ENCODE measurements at regions of chr6 and their contacts with region 1.

Region 1: DNA sequence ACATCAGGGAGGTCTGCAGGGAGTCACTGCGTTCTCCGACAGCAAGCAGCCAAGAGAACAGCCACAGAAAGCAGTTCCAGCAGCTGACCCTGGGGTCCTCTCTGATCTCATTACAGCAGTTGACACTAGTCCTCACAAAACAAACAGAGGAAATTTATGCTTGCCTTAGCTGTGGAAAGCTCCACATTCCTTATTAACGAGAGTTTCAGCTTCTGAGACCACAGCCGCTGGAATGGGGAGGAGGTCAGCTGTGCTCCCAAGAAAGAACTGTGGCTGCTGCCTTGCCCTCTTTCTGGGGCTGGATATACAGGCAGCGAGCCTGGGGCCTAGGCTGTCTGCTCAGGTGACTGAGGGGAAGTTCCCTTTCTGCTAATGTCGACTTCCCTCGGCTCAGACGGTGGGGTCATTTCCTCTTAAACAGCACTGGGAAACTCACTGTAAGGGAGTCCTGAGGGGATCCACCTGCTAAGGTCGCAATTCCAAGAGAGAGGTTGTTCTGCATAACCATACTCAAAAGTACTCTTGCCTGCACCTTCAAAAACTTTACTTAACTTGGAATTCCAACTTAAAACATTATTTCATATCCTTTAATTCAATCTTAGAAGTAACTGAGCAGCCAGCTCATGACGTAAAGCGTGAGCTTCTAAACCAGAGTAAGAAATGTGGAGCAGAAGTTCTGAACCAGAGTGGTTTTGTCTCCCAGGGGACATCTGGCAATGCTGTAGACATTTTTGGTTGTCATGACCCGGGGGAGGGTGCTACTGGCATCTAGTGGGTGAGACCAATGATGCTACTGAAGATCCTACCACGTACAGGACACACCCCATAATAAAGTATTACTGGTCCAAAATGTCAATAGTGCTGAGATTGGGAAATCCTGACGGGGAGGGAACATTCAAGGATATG is 80.3 kb downstream of the BACH2 start:
- DNase-seq: no peak
- ATAC-seq: no peak
- H3K4me3 ChIP-seq: no peak overlapping the region
- H3K27ac ChIP-seq: no peak overlapping the region
- H3K4me1 ChIP-seq: peaks cover 52% of the 10 kb centered on the region
- H3K27me3 ChIP-seq: no peaks in the 10 kb centered on the region
- CTCF ChIP-seq: no peak

Region 2: DNA sequence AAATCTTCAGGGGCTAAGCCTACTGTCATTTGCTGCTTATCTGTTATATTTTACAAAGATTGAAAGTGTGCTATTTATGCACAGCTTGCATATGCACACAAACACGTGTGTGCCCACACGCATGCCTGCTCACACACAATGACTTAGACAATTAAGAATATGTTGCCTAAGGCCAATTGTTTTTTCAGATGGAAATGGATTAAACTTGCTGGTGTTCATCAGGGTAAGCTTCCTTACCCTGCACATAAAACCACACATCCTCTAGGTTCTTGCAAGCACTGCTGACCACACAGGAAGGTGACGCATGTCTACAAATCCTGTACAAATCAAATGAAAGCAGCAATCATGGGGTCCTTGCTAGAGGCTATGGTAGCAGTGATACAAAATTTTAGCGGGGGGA is 263.6 kb before region 1 on chr6:
- CTCF ChIA-PET with region 1: no interaction called
- POLR2A ChIA-PET with region 1: no interaction called
- intact Hi-C with region 1: loop called (anchors 2 kb)
- DNase-seq: peak; percentile 92
- ATAC-seq: peak; percentile 81
- H3K4me3 ChIP-seq: peak overlapping the region; percentile 16; the same call in 1 of the 2 replicates
- H3K27ac ChIP-seq: peak overlapping the region; percentile 90
- H3K4me1 ChIP-seq: peaks cover 44% of the 10 kb centered on the region
- H3K27me3 ChIP-seq: no peaks in the 10 kb centered on the region
- CTCF ChIP-seq: no peak

Region 3: GRCh38 chr6:90204327-90205056 is 11.8 kb before region 1 on chr6:
- CTCF ChIA-PET with region 1: no interaction called
- POLR2A ChIA-PET with region 1: no interaction called
- intact Hi-C with region 1: loop called (anchors 2 kb)
- DNase-seq: peak; percentile 28
- ATAC-seq: peak; percentile 64
- H3K4me3 ChIP-seq: no peak overlapping the region
- H3K27ac ChIP-seq: no peak overlapping the region
- H3K4me1 ChIP-seq: peaks cover 5% of the 10 kb centered on the region; the same call in 1 of the 2 replicates
- H3K27me3 ChIP-seq: no peaks in the 10 kb centered on the region
- CTCF ChIP-seq: no peak

Region 4: DNA sequence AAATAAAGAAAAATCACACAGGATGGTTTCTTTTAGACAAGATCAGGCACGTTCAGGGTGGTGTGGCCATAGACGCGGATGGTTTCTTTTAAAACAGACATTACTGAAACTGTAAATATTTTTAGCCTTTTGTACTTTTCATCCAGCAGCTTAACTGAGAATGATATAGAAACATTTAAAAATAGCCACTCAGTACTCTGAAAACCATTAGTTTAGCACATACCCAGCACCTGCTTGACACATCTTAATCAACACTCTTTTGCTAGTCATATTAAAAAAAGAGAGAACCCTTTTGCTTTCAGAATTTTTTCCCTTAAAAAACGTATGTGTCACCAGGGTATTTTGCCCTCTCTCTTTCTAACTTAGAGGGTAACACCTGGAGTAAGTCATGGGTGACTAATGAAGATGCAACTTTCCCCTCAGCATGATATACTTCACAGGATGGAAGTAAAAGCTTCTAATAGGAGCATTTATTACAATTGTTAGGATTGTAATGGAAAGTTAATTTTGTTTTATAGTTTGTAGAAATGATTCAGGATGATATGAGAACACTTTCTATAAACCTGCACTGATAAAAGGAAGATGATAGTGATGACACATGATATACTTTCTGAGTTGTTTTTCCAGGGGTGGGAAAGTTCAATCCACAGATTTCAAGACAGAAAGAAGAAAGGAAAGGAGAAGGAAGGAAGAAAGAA is 35.1 kb after region 1 on chr6:
- CTCF ChIA-PET with region 1: no interaction called
- POLR2A ChIA-PET with region 1: no interaction called
- intact Hi-C with region 1: loop called (anchors 5 kb)
- DNase-seq: no peak
- ATAC-seq: no peak
- H3K4me3 ChIP-seq: no peak overlapping the region
- H3K27ac ChIP-seq: peak overlapping the region; percentile 18; the same call in 1 of the 2 replicates
- H3K4me1 ChIP-seq: peaks cover 11% of the 10 kb centered on the region; the same call in 1 of the 2 replicates
- H3K27me3 ChIP-seq: no peaks in the 10 kb centered on the region
- CTCF ChIP-seq: no peak

Region 5: GRCh38 chr6:90285611-90286381 is 69.5 kb after region 1 on chr6:
- CTCF ChIA-PET with region 1: no interaction called
- POLR2A ChIA-PET with region 1: interaction called, 4 read pairs
- intact Hi-C with region 1: loop called (anchors 1 kb)
- DNase-seq: peak; percentile 80
- ATAC-seq: peak; percentile 87
- H3K4me3 ChIP-seq: peak overlapping the region; percentile 74; the same call in 1 of the 2 replicates
- H3K27ac ChIP-seq: peak overlapping the region; percentile 98
- H3K4me1 ChIP-seq: peaks cover 41% of the 10 kb centered on the region
- H3K27me3 ChIP-seq: no peaks in the 10 kb centered on the region
- CTCF ChIP-seq: no peak

Region 6: DNA sequence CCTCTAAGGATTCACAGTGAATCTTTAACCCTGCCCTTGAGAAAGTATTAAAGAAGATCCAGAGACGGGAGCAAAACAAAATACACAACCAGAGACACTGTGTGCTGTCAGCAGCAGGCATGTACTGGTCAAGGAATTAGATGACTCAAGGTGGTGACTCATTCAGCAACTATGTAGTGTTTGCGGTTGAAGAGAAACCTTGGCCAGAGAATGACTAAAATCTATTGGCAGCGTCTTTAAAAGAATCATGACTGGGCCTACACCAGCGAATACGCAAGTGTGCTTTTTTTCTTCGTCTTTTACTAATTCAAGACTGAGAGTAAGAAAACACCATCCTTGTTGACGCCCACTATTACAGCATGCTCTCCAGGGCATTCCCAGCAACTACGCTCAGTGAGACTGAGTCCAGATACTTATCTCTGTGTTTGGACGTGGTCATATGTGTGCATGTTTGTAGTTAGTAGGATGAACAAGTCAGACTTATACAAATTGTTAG is 152.7 kb after region 1 on chr6:
- CTCF ChIA-PET with region 1: no interaction called
- POLR2A ChIA-PET with region 1: no interaction called
- intact Hi-C with region 1: loop called (anchors 2 kb)
- DNase-seq: peak; percentile 98
- ATAC-seq: peak; percentile 98
- H3K4me3 ChIP-seq: peak overlapping the region; percentile 45; the same call in 1 of the 2 replicates
- H3K27ac ChIP-seq: peak overlapping the region; percentile 84
- H3K4me1 ChIP-seq: peaks cover 48% of the 10 kb centered on the region
- H3K27me3 ChIP-seq: no peaks in the 10 kb centered on the region
- CTCF ChIP-seq: no peak